ENCODE measurements at regions of chr16 and their contacts with region 1.

Region 1: GRCh38 chr16:84084570-84085270 is 32.0 kb downstream of the MBTPS1 start:
- DNase-seq: peak; percentile 84
- H3K4me3 ChIP-seq: peak overlapping the region in 1 of 2 experiments; percentile 16; a peak in 1 of 4 replicates
- H3K27ac ChIP-seq: no peak overlapping the region
- H3K4me1 ChIP-seq: no peaks in the 10 kb centered on the region
- H3K27me3 ChIP-seq: no peaks in the 10 kb centered on the region
- CTCF ChIP-seq: peak; percentile 82
- EP300 ChIP-seq: no peak
- RAD21 ChIP-seq: peak; percentile 72

Region 2: GRCh38 chr16:83847371-83848225 is 237.1 kb before region 1 on chr16:
- CTCF ChIA-PET with region 1: no interaction called
- POLR2A ChIA-PET with region 1: no interaction called
- DNase-seq: peak; percentile 74
- H3K4me3 ChIP-seq: no peak overlapping the region
- H3K27ac ChIP-seq: peak overlapping the region in 1 of 2 experiments; percentile 72; a peak in 2 of 4 replicates
- H3K4me1 ChIP-seq: no peaks in the 10 kb centered on the region; a peak in 2 of 4 replicates
- H3K27me3 ChIP-seq: no peaks in the 10 kb centered on the region; the same call in 1 of the 2 replicates
- CTCF ChIP-seq: no peak
- EP300 ChIP-seq: no peak
- RAD21 ChIP-seq: no peak

Region 3: GRCh38 chr16:84072014-84072413 is 12.7 kb before region 1 on chr16:
- CTCF ChIA-PET with region 1: interaction called, 163 read pairs
- POLR2A ChIA-PET with region 1: no interaction called
- DNase-seq: no peak
- H3K4me3 ChIP-seq: no peak overlapping the region
- H3K27ac ChIP-seq: no peak overlapping the region
- H3K4me1 ChIP-seq: peaks cover 0 to 5% of the 10 kb centered on the region in 2 experiments; a peak in 1 of 4 replicates
- H3K27me3 ChIP-seq: no peaks in the 10 kb centered on the region
- CTCF ChIP-seq: no peak
- EP300 ChIP-seq: no peak
- RAD21 ChIP-seq: no peak

Region 4: DNA sequence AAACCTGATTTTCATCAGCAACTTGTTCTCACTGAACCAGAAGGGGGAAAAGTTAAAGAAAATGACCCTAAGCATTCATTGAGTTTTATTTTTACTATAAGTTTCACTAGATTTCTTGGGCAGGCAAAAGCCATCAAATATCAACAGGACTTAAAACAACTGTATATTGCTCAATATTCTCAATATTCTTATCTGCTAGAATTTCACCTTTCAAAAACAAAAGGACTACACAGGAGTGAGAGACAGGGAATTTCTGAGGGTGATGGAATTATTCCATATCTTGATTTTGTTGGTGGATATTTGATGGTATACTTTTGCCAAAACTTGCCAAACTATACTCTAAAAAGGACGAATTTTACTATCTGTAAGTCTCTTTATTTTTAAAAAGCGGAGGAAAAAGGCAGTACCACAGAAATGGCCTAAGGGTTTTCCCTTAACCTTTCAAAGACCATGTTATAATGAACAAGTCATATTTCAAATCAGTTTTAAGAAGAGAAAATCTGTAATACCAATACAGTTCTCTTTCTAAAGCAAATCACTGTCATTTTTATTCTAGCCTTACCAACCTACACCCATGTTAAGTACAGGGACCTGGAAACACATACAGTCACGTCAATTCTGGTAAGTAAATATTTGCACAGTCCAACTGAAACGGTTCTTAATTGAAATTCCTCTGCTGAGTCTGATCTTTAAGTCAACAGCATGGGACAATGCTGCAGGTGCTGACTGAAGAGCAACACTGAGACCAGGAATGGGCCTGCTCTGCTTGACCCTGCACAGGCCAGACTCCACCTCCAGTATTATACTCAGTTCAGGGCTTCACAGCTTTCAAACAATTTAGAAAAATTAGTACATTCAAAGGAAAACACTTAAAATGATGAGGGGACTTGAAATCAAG is 11.6 kb after region 1 on chr16:
- CTCF ChIA-PET with region 1: interaction called, 29 read pairs
- POLR2A ChIA-PET with region 1: interaction called, 3 read pairs
- DNase-seq: no peak
- H3K4me3 ChIP-seq: no peak overlapping the region
- H3K27ac ChIP-seq: no peak overlapping the region
- H3K4me1 ChIP-seq: peaks cover 0 to 7% of the 10 kb centered on the region in 2 experiments; a peak in 1 of 4 replicates
- H3K27me3 ChIP-seq: no peaks in the 10 kb centered on the region
- CTCF ChIP-seq: no peak
- EP300 ChIP-seq: no peak
- RAD21 ChIP-seq: no peak

Region 5: GRCh38 chr16:84166796-84167695 is 82.3 kb after region 1 on chr16:
- CTCF ChIA-PET with region 1: interaction called, 109 read pairs
- POLR2A ChIA-PET with region 1: no interaction called
- DNase-seq: no peak
- H3K4me3 ChIP-seq: no peak overlapping the region
- H3K27ac ChIP-seq: no peak overlapping the region
- H3K4me1 ChIP-seq: no peaks in the 10 kb centered on the region
- H3K27me3 ChIP-seq: peaks cover 46% of the 10 kb centered on the region
- CTCF ChIP-seq: no peak
- EP300 ChIP-seq: no peak
- RAD21 ChIP-seq: no peak

Region 6: GRCh38 chr16:84175350-84176081 is 90.8 kb after region 1 on chr16:
- CTCF ChIA-PET with region 1: interaction called, 109 read pairs
- POLR2A ChIA-PET with region 1: no interaction called
- DNase-seq: peak; percentile 91
- H3K4me3 ChIP-seq: no peak overlapping the region
- H3K27ac ChIP-seq: no peak overlapping the region
- H3K4me1 ChIP-seq: peaks cover 0 to 7% of the 10 kb centered on the region in 2 experiments; a peak in 1 of 4 replicates
- H3K27me3 ChIP-seq: no peaks in the 10 kb centered on the region
- CTCF ChIP-seq: peak; percentile 78
- EP300 ChIP-seq: no peak
- RAD21 ChIP-seq: peak; percentile 91

Region 7: DNA sequence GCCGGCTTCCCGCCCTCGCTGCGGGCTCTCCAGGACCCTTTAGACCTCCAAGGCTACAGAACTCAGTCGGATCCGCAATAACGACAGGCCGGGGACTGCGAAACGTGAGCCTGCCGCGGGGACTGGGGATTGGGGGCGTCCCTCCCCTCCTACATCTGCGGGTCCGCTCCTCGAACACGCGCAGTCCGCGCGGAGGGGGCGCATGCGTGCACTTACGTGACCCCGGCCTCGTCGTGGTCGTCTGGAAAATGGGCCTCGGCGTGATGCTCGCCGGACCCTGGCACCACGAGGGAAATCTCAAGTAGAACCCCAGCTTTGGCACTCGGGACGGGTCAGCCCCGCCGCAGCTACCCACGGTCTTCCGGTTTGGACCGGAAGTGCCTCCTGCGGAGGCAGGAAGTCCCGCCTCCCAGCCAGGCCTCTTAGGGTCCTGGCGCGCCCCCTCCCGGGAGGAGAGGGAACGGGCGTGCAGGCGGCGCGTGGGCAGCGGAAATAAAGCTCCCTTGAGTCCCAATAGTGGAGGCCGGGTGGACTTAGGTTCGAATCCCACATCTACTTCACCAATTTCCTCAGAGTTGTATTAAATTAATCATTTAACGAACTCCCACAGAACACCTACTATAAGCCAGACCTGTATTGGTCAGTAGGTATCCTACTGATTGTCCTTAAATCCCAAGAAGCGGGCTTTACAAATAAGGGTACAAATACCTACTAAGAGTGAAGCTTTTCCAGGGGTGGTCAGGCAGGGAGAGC is 102.1 kb after region 1 on chr16 and contains the start of gene TAF1C:
- CTCF ChIA-PET with region 1: interaction called, 30 read pairs
- POLR2A ChIA-PET with region 1: no interaction called
- DNase-seq: peak; percentile 99
- H3K4me3 ChIP-seq: peak within 1 kb of the TSS; percentile 96 to 100
- H3K27ac ChIP-seq: peak within 1 kb of the TSS; percentile 51 to 64; a peak in 3 of 4 replicates
- H3K4me1 ChIP-seq: peaks cover 0 to 11% of the 10 kb centered on the region in 2 experiments; a peak in 1 of 4 replicates
- H3K27me3 ChIP-seq: no peaks in the 10 kb centered on the region
- CTCF ChIP-seq: peak; percentile 91
- EP300 ChIP-seq: no peak; a peak in 1 of 4 replicates
- RAD21 ChIP-seq: peak; percentile 67
- polyA plus RNA-seq, gene TAF1C: 49.3 and 56.1 TPM in 2 replicates

Region 8: DNA sequence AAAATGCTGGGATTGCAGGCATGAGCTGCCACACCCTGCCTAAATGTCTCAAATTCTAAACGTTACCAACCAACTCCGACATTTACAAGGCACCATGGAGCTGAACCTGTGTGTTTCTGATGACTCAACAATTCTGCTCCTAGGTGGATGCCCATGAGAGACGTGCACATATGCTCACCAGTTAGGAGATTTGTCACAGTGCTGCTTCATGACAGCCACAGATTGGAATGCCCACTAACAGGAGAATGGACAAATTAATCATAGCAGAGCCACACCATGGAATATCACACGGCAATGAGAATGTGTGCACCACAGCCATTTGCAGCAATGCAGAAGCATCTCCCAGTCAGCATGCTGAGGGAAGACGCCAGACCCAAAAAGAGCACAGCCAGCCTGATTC is 163.1 kb after region 1 on chr16:
- CTCF ChIA-PET with region 1: no interaction called
- POLR2A ChIA-PET with region 1: no interaction called
- DNase-seq: no peak
- H3K4me3 ChIP-seq: no peak overlapping the region
- H3K27ac ChIP-seq: no peak overlapping the region
- H3K4me1 ChIP-seq: peaks cover 0 to 6% of the 10 kb centered on the region in 2 experiments; a peak in 1 of 4 replicates
- H3K27me3 ChIP-seq: peaks cover 9% of the 10 kb centered on the region; the same call in 1 of the 2 replicates
- CTCF ChIP-seq: no peak
- EP300 ChIP-seq: no peak
- RAD21 ChIP-seq: no peak

Region 9: GRCh38 chr16:84308120-84308519 is 223.4 kb after region 1 on chr16:
- CTCF ChIA-PET with region 1: interaction called, 20 read pairs
- POLR2A ChIA-PET with region 1: interaction called, 4 read pairs
- DNase-seq: peak; percentile 83
- H3K4me3 ChIP-seq: no peak overlapping the region
- H3K27ac ChIP-seq: no peak overlapping the region
- H3K4me1 ChIP-seq: no peaks in the 10 kb centered on the region
- H3K27me3 ChIP-seq: peaks cover 18% of the 10 kb centered on the region; the same call in 1 of the 2 replicates
- CTCF ChIP-seq: peak; percentile 53
- EP300 ChIP-seq: no peak
- RAD21 ChIP-seq: peak; percentile 80